Caco-2 (cell line): ENCODE measurements at regions of chr7 and their contacts with region 1.

Region 1: GRCh38 chr7:65397730-65398142 is 24.1 kb downstream of the ZNF92 start:
- DNase-seq: peak; percentile 63 to 69
- H3K4me3 ChIP-seq: no peak overlapping the region
- H3K4me3 Mint-ChIP-seq: peak overlapping the region; percentile 22
- H3K27ac Mint-ChIP-seq: no peak overlapping the region
- H3K4me1 ChIP-seq: peaks cover 17% of the 10 kb centered on the region
- H3K4me1 Mint-ChIP-seq: peaks cover 14% of the 10 kb centered on the region
- H3K27me3 ChIP-seq: no peaks in the 10 kb centered on the region
- H3K27me3 Mint-ChIP-seq: no peaks in the 10 kb centered on the region
- CTCF ChIP-seq: peak; percentile 43 to 55

Region 2: DNA sequence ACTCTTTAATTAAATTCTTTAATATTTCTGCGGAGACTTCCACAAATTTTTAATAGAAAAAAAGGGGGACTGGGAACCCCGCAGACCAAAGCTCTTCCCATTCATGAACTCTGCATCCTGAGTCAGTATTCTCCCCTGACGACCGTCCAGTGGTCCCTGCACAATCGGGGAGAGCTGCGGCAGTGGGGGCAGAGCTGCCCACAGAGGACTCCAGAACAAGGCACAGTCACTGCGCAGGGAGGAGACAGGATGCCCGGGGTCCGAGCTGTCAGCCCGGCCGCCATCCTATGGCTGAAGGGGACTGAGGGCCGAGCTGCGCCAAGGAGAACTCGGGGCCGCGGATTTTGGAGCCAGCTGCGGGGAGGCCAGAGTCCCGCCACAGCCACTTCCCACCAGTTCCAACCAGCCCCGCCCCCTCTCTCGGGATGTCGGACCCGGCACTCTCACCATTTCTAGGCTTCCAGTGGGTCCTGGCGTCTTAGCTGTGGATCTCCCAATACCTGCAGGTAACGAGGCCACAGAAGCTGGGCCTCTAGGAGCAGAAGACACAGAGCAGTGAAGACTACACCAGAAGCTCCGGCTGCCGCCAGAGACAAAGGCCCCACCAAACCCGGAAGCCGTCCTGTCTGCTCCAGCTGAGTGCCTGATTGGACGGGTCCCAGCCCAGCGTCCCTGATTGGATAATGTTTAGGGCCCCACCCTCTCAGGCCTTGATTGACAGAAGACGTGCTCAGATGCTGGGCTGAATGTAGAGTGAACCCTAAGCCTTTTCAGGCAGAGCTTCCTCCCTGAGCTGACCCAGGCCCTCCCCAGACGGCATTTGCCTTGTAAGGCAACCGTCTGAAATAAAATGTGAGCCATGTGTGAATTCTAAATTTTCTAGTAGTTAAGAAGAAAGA is 391.4 kb before region 1 on chr7 and contains the start of gene ERV3-1:
- CTCF ChIA-PET with region 1: no interaction called
- POLR2A ChIA-PET with region 1: no interaction called
- intact Hi-C with region 1: loop called (anchors 1 kb)
- DNase-seq: peak; percentile 94 to 97
- H3K4me3 ChIP-seq: peak within 1 kb of the TSS; percentile 69
- H3K4me3 Mint-ChIP-seq: peak within 1 kb of the TSS; percentile 93
- H3K27ac Mint-ChIP-seq: peak within 1 kb of the TSS; percentile 95
- H3K4me1 ChIP-seq: peaks cover 4% of the 10 kb centered on the region
- H3K4me1 Mint-ChIP-seq: peaks cover 14% of the 10 kb centered on the region
- H3K27me3 ChIP-seq: no peaks in the 10 kb centered on the region
- H3K27me3 Mint-ChIP-seq: no peaks in the 10 kb centered on the region
- CTCF ChIP-seq: no peak
- total RNA-seq, gene ERV3-1: 10.9 and 13.5 TPM in 2 replicates

Region 3: DNA sequence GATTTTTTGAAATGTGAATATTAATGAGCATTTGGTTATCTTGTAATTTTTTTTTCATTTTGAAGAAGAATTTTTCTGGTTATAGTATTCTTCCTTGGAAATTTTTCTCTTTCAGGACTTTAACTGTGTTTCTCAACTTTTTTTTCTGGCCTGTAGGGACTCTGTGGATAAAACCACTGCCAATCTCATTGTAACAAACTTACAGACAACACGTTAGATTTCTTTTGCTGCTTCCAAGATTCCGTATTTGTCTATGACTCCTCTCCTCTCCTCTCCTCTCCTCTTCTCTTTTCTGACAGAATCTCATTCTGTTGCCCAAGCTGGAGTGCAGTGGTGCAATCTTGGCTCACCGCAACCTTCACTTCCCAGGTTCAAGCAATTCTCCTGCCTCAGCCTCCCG is 43.5 kb before region 1 on chr7:
- CTCF ChIA-PET with region 1: no interaction called
- POLR2A ChIA-PET with region 1: no interaction called
- intact Hi-C with region 1: loop called (anchors 1 kb)
- DNase-seq: no peak
- H3K4me3 ChIP-seq: no peak overlapping the region
- H3K4me3 Mint-ChIP-seq: no peak overlapping the region
- H3K27ac Mint-ChIP-seq: no peak overlapping the region
- H3K4me1 ChIP-seq: no peaks in the 10 kb centered on the region
- H3K4me1 Mint-ChIP-seq: peaks cover 9% of the 10 kb centered on the region
- H3K27me3 ChIP-seq: no peaks in the 10 kb centered on the region
- H3K27me3 Mint-ChIP-seq: no peaks in the 10 kb centered on the region
- CTCF ChIP-seq: no peak

Region 4: GRCh38 chr7:65840446-65840845 is 442.7 kb after region 1 on chr7:
- CTCF ChIA-PET with region 1: no interaction called
- POLR2A ChIA-PET with region 1: no interaction called
- intact Hi-C with region 1: no loop called
- DNase-seq: no peak
- H3K4me3 ChIP-seq: no peak overlapping the region
- H3K4me3 Mint-ChIP-seq: no peak overlapping the region
- H3K27ac Mint-ChIP-seq: peak overlapping the region; percentile 13
- H3K4me1 ChIP-seq: peaks cover 5% of the 10 kb centered on the region; the same call in 1 of the 2 replicates
- H3K4me1 Mint-ChIP-seq: no peaks in the 10 kb centered on the region
- H3K27me3 ChIP-seq: no peaks in the 10 kb centered on the region
- H3K27me3 Mint-ChIP-seq: no peaks in the 10 kb centered on the region
- CTCF ChIP-seq: no peak